Activated CD4-positive, alpha-beta T cell treated with anti-CD3 and anti-CD28 coated beads, Interleukin-2, amount 10 ng/mL, durations not matched to agents 24 days and 14 days (primary cell): ENCODE measurements at regions of chr10 and their contacts with region 1.

Region 1: GRCh38 chr10:60572511-60573194 is 183.0 kb upstream of the ANK3 start:
- DNase-seq: peak; percentile 76
- H3K4me3 Mint-ChIP-seq: peak overlapping the region; percentile 94
- H3K27ac Mint-ChIP-seq: peak overlapping the region; percentile 90
- H3K4me1 Mint-ChIP-seq: peaks cover 48% of the 10 kb centered on the region
- H3K27me3 Mint-ChIP-seq: no peaks in the 10 kb centered on the region

Region 2: DNA sequence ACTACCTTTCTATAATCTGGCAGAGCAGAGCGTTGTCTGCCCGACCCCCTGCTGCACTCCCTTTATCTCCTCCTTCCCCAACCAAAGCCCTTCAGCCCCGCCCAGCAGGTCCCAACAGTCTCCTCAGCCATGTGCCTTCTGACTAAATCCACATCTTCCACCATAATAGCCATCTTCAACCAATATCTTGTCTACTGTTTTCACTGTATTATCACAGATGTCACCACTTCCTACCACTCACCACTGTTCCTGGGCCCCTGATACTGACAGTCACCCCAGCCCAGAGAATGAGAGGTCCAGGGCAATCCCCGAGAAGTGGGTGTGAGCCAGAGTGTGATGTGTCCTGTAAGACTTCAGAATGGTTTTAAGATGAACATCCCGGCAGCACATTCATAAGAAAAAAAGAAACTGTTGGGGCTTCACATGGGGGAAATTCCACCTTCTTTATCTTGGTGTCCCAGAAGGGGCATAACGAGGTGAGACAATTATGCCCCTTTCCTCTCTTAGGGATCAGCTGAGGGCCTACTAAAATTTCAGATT is 691.6 kb before region 1 on chr10:
- intact Hi-C with region 1: loop called (anchors 1 kb)
- DNase-seq: peak; percentile 87
- H3K4me3 Mint-ChIP-seq: peak overlapping the region; percentile 69
- H3K27ac Mint-ChIP-seq: peak overlapping the region; percentile 92
- H3K4me1 Mint-ChIP-seq: peaks cover 74% of the 10 kb centered on the region
- H3K27me3 Mint-ChIP-seq: no peaks in the 10 kb centered on the region

Region 3: DNA sequence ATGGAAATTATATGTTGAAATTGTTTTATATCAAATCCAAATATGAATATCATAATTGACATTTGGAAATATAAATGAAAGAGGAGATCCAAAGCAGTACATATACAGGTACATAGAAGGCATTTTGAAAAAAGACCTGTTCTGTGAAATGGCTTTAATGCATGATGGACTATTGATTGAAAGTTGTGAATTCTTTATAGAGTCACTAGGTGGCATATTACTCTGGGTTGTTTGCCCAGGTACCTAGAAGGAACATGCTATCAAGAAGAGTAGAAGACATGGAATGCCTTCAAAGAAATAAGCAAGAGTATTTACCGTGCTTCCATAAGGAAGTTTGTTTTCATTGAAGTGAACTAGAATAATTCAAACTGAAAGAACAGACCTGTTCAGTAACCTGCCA is 23.0 kb before region 1 on chr10:
- intact Hi-C with region 1: loop called (anchors 1 kb)
- DNase-seq: no peak
- H3K4me3 Mint-ChIP-seq: no peak overlapping the region
- H3K27ac Mint-ChIP-seq: no peak overlapping the region
- H3K4me1 Mint-ChIP-seq: no peaks in the 10 kb centered on the region
- H3K27me3 Mint-ChIP-seq: no peaks in the 10 kb centered on the region

Region 4: DNA sequence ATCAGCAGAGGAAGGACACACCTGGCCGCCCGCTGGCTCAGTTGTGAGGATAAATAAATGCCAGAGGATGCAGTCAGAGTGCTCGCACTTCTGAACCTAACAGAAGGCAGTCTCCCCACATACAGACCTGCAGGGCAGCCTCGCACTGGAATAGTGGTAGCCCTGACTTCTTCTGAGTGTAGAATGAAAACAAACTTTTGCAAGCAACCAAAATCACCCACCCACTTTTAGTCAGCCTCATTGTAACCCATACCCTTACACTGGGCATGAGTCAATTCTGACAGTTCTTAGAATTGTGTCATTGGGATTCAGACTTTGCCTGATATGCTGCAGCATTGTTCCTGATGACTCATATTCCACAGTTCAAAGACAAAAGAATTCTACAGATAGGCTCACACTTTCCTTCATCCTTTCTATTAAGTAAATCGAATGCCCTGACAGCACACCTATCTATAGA is 38.7 kb after region 1 on chr10:
- intact Hi-C with region 1: loop called (anchors 2 kb)
- DNase-seq: peak; percentile 61
- H3K4me3 Mint-ChIP-seq: no peak overlapping the region
- H3K27ac Mint-ChIP-seq: peak overlapping the region; percentile 78
- H3K4me1 Mint-ChIP-seq: peaks cover 19% of the 10 kb centered on the region
- H3K27me3 Mint-ChIP-seq: no peaks in the 10 kb centered on the region

Region 5: GRCh38 chr10:60728056-60728455 is 155.4 kb after region 1 on chr10:
- intact Hi-C with region 1: loop called (anchors 1 kb)
- DNase-seq: peak; percentile 87
- H3K4me3 Mint-ChIP-seq: peak overlapping the region; percentile 84
- H3K27ac Mint-ChIP-seq: peak overlapping the region; percentile 88
- H3K4me1 Mint-ChIP-seq: peaks cover 71% of the 10 kb centered on the region
- H3K27me3 Mint-ChIP-seq: no peaks in the 10 kb centered on the region